ENCODE measurements at regions of chr20 and their contacts with region 1.

Region 1: GRCh38 chr20:561437-562231 is 18.0 kb upstream of the CSNK2A1 start:
- DNase-seq: peak; percentile 37 to 85
- ATAC-seq: peak; percentile 68 to 92 (median 84)
- H3K4me3 ChIP-seq: no peak overlapping the region
- H3K27ac ChIP-seq: no peak overlapping the region
- H3K4me1 ChIP-seq: peaks cover 0 to 33% (median 10%) of the 10 kb centered on the region in 9 donors
- H3K27me3 ChIP-seq: no peaks in the 10 kb centered on the region
- CTCF ChIP-seq: peak; percentile 13 to 100 (median 98)

Region 2: GRCh38 chr20:444862-445426 is 116.7 kb before region 1 on chr20:
- intact Hi-C with region 1: no loop called
- DNase-seq: no peak
- ATAC-seq: peak; percentile 52 to 72 (median 65)
- H3K4me3 ChIP-seq: no peak overlapping the region
- H3K27ac ChIP-seq: peak overlapping the region in 7 of 10 donors; percentile 9 to 39 (median 27)
- H3K4me1 ChIP-seq: peaks cover 9 to 36% (median 23%) of the 10 kb centered on the region in 9 donors
- H3K27me3 ChIP-seq: no peaks in the 10 kb centered on the region
- CTCF ChIP-seq: no peak

Region 3: DNA sequence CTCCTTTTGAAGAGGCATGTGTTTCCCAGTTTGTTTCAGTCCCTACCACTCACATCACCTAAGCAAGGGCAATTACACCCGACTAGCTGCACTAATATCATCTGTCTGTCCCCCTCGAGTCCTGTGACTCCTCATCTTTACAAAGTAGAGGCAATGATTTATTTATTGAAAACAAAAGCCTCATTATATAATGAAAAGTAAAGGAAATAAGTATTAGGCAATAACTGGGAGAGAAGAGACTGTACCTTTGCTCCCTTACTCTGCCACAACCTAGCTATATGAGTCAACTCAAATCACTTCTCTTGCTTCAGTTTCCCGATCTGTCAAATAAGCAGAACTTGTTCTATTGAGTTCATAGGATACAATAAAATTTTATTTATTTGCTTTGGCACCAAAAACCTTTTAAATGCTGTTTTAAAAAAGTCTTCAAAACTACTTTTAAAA is 57.0 kb before region 1 on chr20:
- intact Hi-C with region 1: no loop called
- DNase-seq: no peak
- ATAC-seq: no peak
- H3K4me3 ChIP-seq: no peak overlapping the region
- H3K27ac ChIP-seq: no peak overlapping the region
- H3K4me1 ChIP-seq: peaks cover 0 to 29% (median 16%) of the 10 kb centered on the region in 9 donors
- H3K27me3 ChIP-seq: no peaks in the 10 kb centered on the region
- CTCF ChIP-seq: no peak

Region 4: DNA sequence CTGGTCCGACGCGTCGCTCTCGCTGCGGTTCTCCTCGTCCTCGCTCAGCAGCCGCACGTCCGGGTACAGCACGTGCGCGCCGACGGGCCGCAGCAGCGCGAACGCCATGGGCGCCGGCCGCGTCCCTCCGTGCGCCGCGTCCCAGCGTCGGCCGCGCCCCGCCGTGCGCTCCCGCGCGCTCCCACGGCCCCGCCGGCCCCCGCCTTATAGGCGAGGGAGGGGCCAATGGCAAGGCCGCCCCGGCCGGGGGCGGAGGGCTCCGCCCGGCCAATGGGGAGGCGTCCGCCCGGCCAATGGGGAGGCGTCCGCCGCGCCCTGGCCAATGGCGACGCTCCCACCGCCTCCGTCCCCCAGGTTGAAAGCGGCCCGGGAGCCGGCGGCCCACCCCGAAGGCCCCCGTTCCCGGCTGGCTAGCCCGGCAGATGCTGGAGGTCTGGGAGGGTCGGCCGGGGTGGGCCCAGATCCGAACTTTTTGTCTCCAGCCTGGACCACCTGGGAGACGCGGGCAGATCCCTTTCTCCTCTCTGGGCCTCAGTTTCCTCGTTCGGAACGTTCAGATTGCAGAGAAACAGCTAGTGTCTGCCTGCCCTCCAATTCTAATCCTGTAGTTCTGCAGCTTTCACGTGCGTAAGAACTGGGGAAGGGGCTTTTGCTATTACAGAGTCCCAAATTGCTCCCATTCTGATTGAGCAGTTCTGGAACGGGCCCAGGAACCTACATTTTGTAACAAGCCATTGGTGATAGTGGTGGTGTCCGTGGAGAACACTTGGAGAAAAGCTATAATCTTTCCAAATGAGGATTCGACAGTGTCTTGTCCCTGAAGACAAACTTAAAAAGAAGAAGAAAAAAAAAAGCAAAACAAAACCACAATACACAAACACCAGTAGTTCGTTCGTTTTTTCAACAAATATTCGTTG is 48.8 kb after region 1 on chr20 and contains the start of gene TCF15:
- intact Hi-C with region 1: loop called in 1 of 10 experiments (anchors 2 kb)
- DNase-seq: peak; percentile 67 to 77
- ATAC-seq: peak; percentile 86 to 92 (median 90)
- H3K4me3 ChIP-seq: peak within 1 kb of the TSS; percentile 56 to 77 (median 64)
- H3K27ac ChIP-seq: peak within 1 kb of the TSS; percentile 76 to 94 (median 89)
- H3K4me1 ChIP-seq: peaks cover 6 to 49% (median 23%) of the 10 kb centered on the region in 9 donors
- H3K27me3 ChIP-seq: peaks cover 0 to 50% (median 3%) of the 10 kb centered on the region in 7 donors
- CTCF ChIP-seq: no peak
- total RNA-seq, gene TCF15: 4.6 to 20.5 (median 7.9) TPM

Region 5: DNA sequence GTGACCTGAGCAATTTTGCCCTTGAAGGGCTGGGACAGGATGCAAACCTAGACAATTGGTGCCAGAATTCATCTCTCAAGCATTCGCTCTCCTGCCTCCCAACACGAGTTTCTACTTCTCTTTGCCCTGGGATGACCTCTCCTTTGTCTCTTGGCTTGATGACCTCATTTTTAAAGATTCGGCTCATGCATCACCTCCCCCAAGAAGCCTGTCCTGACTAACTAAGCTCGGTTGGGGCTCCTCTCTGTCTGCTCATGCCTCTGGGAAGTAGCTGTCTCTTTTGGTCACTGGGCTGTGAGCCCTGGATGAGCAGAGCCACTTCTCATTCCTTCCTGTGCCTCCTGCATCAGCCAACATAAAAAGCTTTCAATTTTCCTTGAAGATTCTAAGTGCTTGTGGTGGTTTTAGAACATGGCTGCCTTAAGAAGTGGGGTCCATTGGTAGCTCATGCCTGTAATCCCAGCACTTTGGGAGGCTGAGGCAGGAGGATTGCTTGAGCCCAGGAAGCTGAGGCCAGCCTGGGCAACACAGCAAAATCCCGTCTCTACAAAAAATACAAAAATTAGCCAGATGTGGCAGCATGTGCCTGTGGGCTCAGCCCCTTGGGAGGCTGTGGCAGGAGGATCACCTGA is 59.6 kb after region 1 on chr20:
- intact Hi-C with region 1: no loop called
- DNase-seq: no peak
- ATAC-seq: no peak
- H3K4me3 ChIP-seq: no peak overlapping the region
- H3K27ac ChIP-seq: no peak overlapping the region
- H3K4me1 ChIP-seq: peaks cover 0 to 12% (median 4%) of the 10 kb centered on the region in 9 donors
- H3K27me3 ChIP-seq: no peaks in the 10 kb centered on the region
- CTCF ChIP-seq: no peak

Region 6: DNA sequence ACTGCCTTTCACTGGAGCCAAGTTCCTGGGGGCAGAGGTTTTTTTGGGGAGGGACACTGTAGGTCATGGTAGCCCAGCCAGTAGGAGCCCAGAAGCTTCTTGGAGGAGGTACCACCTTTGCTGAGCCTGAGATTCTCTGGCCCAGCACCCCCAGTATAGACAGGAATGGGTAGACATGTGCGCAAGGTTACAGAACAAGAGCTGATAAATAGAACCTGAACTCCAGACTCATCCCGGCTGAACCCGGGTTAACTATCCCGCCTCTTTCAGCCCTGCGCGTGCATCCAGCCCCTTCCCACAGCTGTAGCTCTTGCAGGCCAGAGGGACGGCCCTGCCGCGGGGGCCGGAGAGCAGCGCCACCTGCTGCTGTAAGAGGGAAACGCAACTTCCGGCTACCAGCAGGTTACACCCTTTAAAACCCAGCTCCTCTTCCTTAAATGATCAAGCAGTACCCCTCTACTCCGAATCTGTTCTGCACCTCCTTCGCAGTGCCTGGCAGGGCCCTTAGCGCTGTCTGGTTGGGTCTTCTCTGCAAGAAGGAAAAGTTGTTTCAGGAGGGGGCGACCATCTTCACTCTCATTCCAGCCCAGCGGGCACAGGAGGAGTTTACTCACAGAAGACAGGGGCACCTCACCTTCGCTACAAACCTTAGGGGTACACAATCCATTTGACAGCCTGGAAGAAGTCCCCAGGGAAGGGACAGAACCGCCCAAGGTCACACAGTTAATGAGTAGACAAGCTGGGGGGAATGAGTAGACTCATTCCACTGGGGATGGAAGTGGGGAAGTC is 83.9 kb after region 1 on chr20:
- intact Hi-C with region 1: loop called (anchors 1 to 2 kb)
- DNase-seq: peak; percentile 73 to 82
- ATAC-seq: peak; percentile 68 to 85 (median 82)
- H3K4me3 ChIP-seq: peak overlapping the region in 1 of 10 donors; percentile 6
- H3K27ac ChIP-seq: peak overlapping the region in 9 of 10 donors; percentile 1 to 67 (median 54)
- H3K4me1 ChIP-seq: peaks cover 2 to 34% (median 24%) of the 10 kb centered on the region in 9 donors
- H3K27me3 ChIP-seq: peaks cover 0 to 14% (median 0%) of the 10 kb centered on the region in 7 donors
- CTCF ChIP-seq: peak; percentile 90 to 99 (median 97)

Region 7: DNA sequence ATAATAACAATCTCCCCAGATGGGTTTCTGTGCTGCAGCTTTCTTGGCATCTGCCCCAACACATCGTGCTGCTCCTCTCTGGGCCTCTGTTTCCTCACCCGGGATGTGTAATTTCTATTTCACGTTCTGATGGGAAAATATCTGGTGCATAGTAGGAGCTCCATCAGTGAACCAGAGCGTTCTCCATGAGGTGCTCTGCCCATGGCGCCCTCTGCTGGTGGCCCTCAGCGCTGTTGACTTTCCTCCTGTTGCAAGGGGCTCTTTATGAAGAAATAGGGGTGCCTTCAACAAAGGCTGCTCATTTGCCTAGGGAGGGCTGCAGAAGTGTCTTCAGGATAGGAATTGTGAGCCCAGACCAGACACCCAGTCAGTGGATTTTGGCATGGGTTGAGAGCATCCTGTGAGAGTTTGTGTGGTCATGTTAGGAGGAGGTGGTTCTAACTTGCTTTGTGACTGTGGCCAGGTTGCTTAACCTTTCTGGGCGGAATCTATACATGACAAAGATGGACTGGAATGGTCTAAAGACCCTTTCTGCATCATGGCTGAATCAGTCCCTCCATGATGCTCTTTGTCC is 105.8 kb after region 1 on chr20:
- intact Hi-C with region 1: loop called in 1 of 10 experiments (anchors 1 kb)
- DNase-seq: peak; percentile 67 to 75
- ATAC-seq: peak in 4 of 8 donors; percentile 3 to 65 (median 50)
- H3K4me3 ChIP-seq: no peak overlapping the region
- H3K27ac ChIP-seq: peak overlapping the region in 8 of 10 donors; percentile 31 to 79 (median 46)
- H3K4me1 ChIP-seq: peaks cover 5 to 45% (median 16%) of the 10 kb centered on the region in 9 donors
- H3K27me3 ChIP-seq: peaks cover 16 to 70% (median 49%) of the 10 kb centered on the region in 7 donors
- CTCF ChIP-seq: peak; percentile 52 to 95 (median 80)

Region 8: DNA sequence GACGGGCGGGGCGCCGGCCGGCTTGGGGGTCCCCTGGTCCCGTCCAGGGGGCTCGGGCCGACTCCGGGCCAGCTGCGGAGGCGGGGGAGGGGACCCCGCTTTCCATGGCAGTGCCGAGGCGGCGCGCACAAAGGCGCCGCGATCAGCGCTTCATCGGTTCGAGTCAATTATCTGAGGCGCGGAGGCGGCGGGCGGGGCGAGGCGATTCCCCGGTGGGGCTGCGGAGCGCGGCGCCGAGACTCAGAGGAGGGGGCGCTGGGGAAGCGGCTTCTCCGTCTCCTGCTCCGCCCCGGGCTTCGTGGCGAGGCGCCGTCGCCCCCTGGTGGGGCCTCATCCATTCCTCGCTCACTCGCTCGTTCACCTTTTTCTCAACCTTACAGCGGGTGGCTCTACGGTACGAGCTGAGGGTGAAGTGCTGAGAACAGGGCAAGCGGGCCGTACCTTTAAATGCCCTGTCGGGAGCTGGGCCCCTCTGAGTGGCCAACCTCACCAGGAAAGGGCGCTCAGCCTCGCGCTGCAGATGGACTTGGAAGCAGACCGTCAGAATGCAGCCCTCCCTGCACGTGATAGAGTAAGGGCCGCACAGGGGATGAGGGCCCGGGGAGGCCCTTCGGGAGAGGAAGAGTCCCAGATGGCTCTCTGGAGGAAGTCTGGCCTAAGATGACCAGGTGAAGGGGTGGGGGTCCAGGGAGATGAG is 166.8 kb after region 1 on chr20:
- intact Hi-C with region 1: loop called in 4 of 10 experiments (anchors 2 to 5 kb)
- DNase-seq: peak; percentile 50 to 66
- ATAC-seq: peak; percentile 75 to 88 (median 84)
- H3K4me3 ChIP-seq: peak overlapping the region; percentile 38 to 70 (median 58)
- H3K27ac ChIP-seq: peak overlapping the region in 1 of 10 donors; percentile 36
- H3K4me1 ChIP-seq: peaks cover 0 to 16% (median 8%) of the 10 kb centered on the region in 9 donors
- H3K27me3 ChIP-seq: peaks cover 0 to 63% (median 35%) of the 10 kb centered on the region in 7 donors
- CTCF ChIP-seq: peak; percentile 43 to 78 (median 71)

Region 9: DNA sequence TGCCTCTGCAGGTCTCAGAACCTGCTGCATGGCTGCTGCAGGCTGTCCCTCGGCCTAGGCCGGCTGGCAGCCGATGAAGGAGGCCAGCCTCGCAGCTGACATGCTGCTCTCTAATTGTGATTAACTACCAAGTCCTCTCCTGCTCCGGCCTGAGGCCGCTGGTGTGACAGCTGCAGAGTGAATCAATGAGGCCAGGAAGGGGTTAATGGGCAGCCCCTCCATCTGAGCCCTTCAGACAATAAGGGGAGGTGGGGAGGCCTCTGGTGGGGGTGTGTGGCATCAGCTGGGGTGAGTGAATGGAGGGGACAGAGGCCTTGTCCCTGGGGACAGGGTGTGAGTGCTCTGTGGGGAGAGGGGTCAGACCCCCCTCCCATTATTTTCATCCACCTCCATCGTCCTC is 172.2 kb after region 1 on chr20:
- intact Hi-C with region 1: loop called (anchors 1 to 5 kb)
- DNase-seq: no peak
- ATAC-seq: no peak
- H3K4me3 ChIP-seq: no peak overlapping the region
- H3K27ac ChIP-seq: no peak overlapping the region
- H3K4me1 ChIP-seq: peaks cover 0 to 3% (median under 1%) of the 10 kb centered on the region in 9 donors
- H3K27me3 ChIP-seq: peaks cover 0 to 23% (median 7%) of the 10 kb centered on the region in 7 donors
- CTCF ChIP-seq: no peak

Region 10: GRCh38 chr20:739736-740135 is 178.1 kb after region 1 on chr20:
- intact Hi-C with region 1: loop called in 9 of 10 experiments (anchors 1 to 5 kb)
- DNase-seq: no peak
- ATAC-seq: no peak
- H3K4me3 ChIP-seq: no peak overlapping the region
- H3K27ac ChIP-seq: no peak overlapping the region
- H3K4me1 ChIP-seq: peaks cover 0 to 3% (median 0%) of the 10 kb centered on the region in 9 donors
- H3K27me3 ChIP-seq: peaks cover 0 to 7% (median 0%) of the 10 kb centered on the region in 7 donors
- CTCF ChIP-seq: no peak

Region 11: GRCh38 chr20:1166948-1167720 is 605.5 kb after region 1 on chr20:
- intact Hi-C with region 1: no loop called
- DNase-seq: no peak
- ATAC-seq: no peak
- H3K4me3 ChIP-seq: no peak overlapping the region
- H3K27ac ChIP-seq: no peak overlapping the region
- H3K4me1 ChIP-seq: peaks cover 0 to 18% (median 6%) of the 10 kb centered on the region in 9 donors
- H3K27me3 ChIP-seq: no peaks in the 10 kb centered on the region
- CTCF ChIP-seq: no peak

Measured in heart right ventricle (tissue), 16 donors.